Activated CD8-positive, alpha-beta T cell treated with anti-CD3 and anti-CD28 coated beads, Interleukin-2, amount 10 ng/mL, durations not matched to agents 7 days and 5 days (primary cell): ENCODE measurements at regions of chr15 and their contacts with region 1.

Region 1: GRCh38 chr15:51829360-51830275 is at the start of gene TMOD3:
- DNase-seq: peak; percentile 92
- ATAC-seq: peak; percentile 88
- H3K4me3 Mint-ChIP-seq: peak within 1 kb of the TSS; percentile 98
- H3K27ac Mint-ChIP-seq: peak within 1 kb of the TSS; percentile 95
- H3K4me1 Mint-ChIP-seq: peaks cover 39% of the 10 kb centered on the region
- H3K27me3 Mint-ChIP-seq: peaks cover 11% of the 10 kb centered on the region
- total RNA-seq, gene TMOD3: 73.8 to 74.1 TPM

Region 2: GRCh38 chr15:51841406-51842040 is 11.9 kb after region 1 on chr15:
- CTCF ChIA-PET with region 1: interaction called, 9 read pairs
- POLR2A ChIA-PET with region 1: interaction called, 17 read pairs
- DNase-seq: no peak
- ATAC-seq: no peak
- H3K4me3 Mint-ChIP-seq: no peak overlapping the region
- H3K27ac Mint-ChIP-seq: no peak overlapping the region
- H3K4me1 Mint-ChIP-seq: peaks cover 71% of the 10 kb centered on the region
- H3K27me3 Mint-ChIP-seq: no peaks in the 10 kb centered on the region